ENCODE measurements at regions of chr7 and their contacts with region 1.

Region 1: DNA sequence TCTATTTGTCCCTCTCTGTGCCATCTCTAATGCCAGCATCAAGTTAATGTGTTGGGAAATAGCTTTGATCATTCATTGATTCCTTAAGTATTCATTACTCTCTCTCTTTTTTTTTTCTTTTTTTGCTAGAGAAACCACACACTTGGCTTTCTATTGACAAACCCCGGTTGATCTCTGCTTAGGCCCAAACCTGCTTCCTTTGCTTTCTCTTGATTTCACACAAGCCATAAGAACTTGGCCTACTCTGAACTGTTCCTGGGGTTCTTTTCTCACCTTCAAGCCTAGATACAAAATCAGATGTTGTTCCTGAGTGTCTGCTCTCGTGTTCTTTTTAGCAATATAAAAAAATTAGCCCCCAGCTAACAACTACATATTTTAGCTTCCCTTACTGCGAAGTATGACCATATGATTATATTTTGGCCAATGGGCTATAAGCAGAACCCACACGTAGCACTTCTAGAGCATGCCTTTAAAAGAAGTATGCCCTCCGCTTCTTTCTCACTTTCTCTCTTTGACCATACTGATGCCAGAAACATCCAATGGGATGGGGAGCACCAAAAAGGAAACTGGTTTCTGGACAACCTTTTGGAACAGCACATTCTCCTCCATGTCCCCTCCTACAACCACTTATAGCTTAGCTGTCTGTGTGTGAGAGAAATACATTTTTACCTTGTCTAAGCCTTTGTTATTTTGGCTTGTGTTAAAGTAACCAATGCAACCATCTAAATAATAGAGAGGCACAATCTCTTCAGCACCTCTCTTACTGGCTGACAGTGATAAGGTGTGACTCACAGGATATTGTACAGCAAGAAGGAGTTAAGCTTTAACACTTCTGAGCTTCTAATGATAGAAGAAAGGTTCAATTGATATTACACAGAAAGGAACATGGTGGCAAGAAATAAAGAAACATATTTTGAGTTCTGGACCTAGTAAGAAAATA is 96.6 kb upstream of the LRRN3 start:
- DNase-seq: peak in 1 of 9 experiments; percentile 32
- ATAC-seq: peak; percentile 88
- H3K4me3 ChIP-seq: no peak overlapping the region
- H3K4me3 Mint-ChIP-seq: peak overlapping the region; percentile 42
- H3K27ac ChIP-seq: peak overlapping the region; percentile 29 to 39
- H3K27ac Mint-ChIP-seq: peak overlapping the region; percentile 94
- H3K4me1 ChIP-seq: peaks cover 21% of the 10 kb centered on the region
- H3K4me1 Mint-ChIP-seq: peaks cover 31% of the 10 kb centered on the region
- H3K27me3 ChIP-seq: no peaks in the 10 kb centered on the region
- H3K27me3 Mint-ChIP-seq: no peaks in the 10 kb centered on the region
- CTCF ChIP-seq: no peak

Region 2: DNA sequence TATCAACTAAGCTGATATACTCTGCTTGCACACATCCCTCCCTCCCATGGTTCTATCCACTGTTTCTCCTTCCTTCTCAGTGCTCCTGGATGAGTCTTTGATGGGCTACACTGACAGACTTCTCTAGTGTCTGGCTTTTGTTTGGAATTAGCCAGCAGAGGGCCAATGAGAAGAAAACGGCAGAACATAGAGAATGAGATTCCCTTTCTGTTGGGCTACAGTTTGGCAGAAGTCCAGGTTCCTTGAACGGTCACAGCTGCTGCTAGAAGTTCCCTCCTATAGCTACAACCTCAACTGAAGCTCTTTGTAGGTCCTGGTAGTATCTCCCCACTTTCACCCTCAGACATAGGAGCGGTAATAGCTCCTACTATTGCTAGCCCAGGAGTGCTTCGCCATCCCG is 154.4 kb before region 1 on chr7:
- CTCF ChIA-PET with region 1: no interaction called
- POLR2A ChIA-PET with region 1: no interaction called
- intact Hi-C with region 1: loop called in 1 of 2 experiments (anchors 5 kb)
- DNase-seq: peak in 1 of 9 experiments; percentile 7
- ATAC-seq: no peak
- H3K4me3 ChIP-seq: no peak overlapping the region
- H3K4me3 Mint-ChIP-seq: no peak overlapping the region
- H3K27ac ChIP-seq: no peak overlapping the region
- H3K27ac Mint-ChIP-seq: no peak overlapping the region
- H3K4me1 ChIP-seq: peaks cover 7% of the 10 kb centered on the region
- H3K4me1 Mint-ChIP-seq: peaks cover 9% of the 10 kb centered on the region
- H3K27me3 ChIP-seq: no peaks in the 10 kb centered on the region
- H3K27me3 Mint-ChIP-seq: no peaks in the 10 kb centered on the region
- CTCF ChIP-seq: no peak

Region 3: DNA sequence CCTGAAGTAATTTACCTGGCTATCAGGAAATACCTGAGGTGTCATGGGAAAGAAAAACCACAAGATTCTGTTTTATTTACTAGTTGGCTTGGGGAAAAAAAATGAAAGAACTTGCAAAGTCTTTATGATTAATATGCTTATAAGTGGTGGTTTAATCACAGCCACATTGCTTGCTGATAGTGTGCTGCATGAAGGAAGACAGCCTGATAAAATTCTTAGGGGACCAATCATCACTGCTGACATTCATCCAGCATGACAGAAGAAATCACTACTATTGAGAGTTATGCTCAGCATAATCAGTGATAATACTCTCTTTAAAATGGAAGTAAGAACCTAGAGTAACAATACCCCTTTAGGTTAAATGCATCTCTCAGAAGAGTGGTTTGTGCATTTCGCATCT is 53.5 kb before region 1 on chr7:
- CTCF ChIA-PET with region 1: no interaction called
- POLR2A ChIA-PET with region 1: no interaction called
- intact Hi-C with region 1: no loop called
- DNase-seq: no peak
- ATAC-seq: no peak
- H3K4me3 ChIP-seq: no peak overlapping the region
- H3K4me3 Mint-ChIP-seq: no peak overlapping the region
- H3K27ac ChIP-seq: no peak overlapping the region
- H3K27ac Mint-ChIP-seq: no peak overlapping the region
- H3K4me1 ChIP-seq: no peaks in the 10 kb centered on the region
- H3K4me1 Mint-ChIP-seq: peaks cover 10% of the 10 kb centered on the region
- H3K27me3 ChIP-seq: no peaks in the 10 kb centered on the region
- H3K27me3 Mint-ChIP-seq: no peaks in the 10 kb centered on the region
- CTCF ChIP-seq: no peak

Region 4: DNA sequence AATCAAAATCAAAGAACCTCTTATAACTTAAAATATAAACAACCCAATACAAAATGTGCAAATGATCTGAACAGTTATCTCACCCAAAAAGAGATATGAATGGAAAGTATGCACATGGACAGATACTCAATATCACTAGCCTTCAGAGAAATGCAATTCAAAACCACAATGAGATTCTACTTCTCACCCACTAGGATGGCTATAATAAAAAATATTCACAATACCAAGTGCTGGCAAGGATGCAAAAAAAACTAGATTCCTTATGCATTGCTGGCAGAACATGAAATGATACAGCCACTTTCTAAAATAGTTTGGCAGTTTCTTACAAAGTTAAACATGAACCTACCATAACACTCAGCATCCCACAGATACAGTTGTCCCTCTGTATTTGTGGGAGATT is 33.5 kb before region 1 on chr7:
- CTCF ChIA-PET with region 1: no interaction called
- POLR2A ChIA-PET with region 1: no interaction called
- intact Hi-C with region 1: loop called in 1 of 2 experiments (anchors 5 kb)
- DNase-seq: no peak
- ATAC-seq: no peak
- H3K4me3 ChIP-seq: no peak overlapping the region
- H3K4me3 Mint-ChIP-seq: no peak overlapping the region
- H3K27ac ChIP-seq: no peak overlapping the region
- H3K27ac Mint-ChIP-seq: no peak overlapping the region
- H3K4me1 ChIP-seq: no peaks in the 10 kb centered on the region
- H3K4me1 Mint-ChIP-seq: peaks cover 4% of the 10 kb centered on the region
- H3K27me3 ChIP-seq: no peaks in the 10 kb centered on the region
- H3K27me3 Mint-ChIP-seq: no peaks in the 10 kb centered on the region
- CTCF ChIP-seq: no peak

Region 5: GRCh38 chr7:110977127-110977737 is 17.1 kb before region 1 on chr7:
- CTCF ChIA-PET with region 1: no interaction called
- POLR2A ChIA-PET with region 1: no interaction called
- intact Hi-C with region 1: loop called in 1 of 2 experiments (anchors 2 kb)
- DNase-seq: peak in 2 of 9 experiments; percentile 18 to 46
- ATAC-seq: peak; percentile 46
- H3K4me3 ChIP-seq: peak overlapping the region in 1 of 2 experiments; percentile 5
- H3K4me3 Mint-ChIP-seq: peak overlapping the region; percentile 72
- H3K27ac ChIP-seq: no peak overlapping the region
- H3K27ac Mint-ChIP-seq: peak overlapping the region; percentile 88
- H3K4me1 ChIP-seq: peaks cover 34% of the 10 kb centered on the region
- H3K4me1 Mint-ChIP-seq: peaks cover 43% of the 10 kb centered on the region
- H3K27me3 ChIP-seq: no peaks in the 10 kb centered on the region
- H3K27me3 Mint-ChIP-seq: no peaks in the 10 kb centered on the region
- CTCF ChIP-seq: no peak

Region 6: GRCh38 chr7:111006691-111007090 is 12.4 kb after region 1 on chr7:
- CTCF ChIA-PET with region 1: interaction called, 4 read pairs
- POLR2A ChIA-PET with region 1: interaction called, 4 read pairs
- intact Hi-C with region 1: loop called in 1 of 2 experiments (anchors 2 kb)
- DNase-seq: no peak
- ATAC-seq: no peak
- H3K4me3 ChIP-seq: no peak overlapping the region
- H3K4me3 Mint-ChIP-seq: no peak overlapping the region
- H3K27ac ChIP-seq: no peak overlapping the region
- H3K27ac Mint-ChIP-seq: no peak overlapping the region
- H3K4me1 ChIP-seq: peaks cover 38% of the 10 kb centered on the region
- H3K4me1 Mint-ChIP-seq: peaks cover 33% of the 10 kb centered on the region
- H3K27me3 ChIP-seq: no peaks in the 10 kb centered on the region
- H3K27me3 Mint-ChIP-seq: no peaks in the 10 kb centered on the region
- CTCF ChIP-seq: no peak

Measured in CD8-positive, alpha-beta T cell (primary cell).